A673 (cell line): ENCODE measurements at regions of chr2 and their contacts with region 1.

Region 1: GRCh38 chr2:101697124-101698013 is at the start of gene MAP4K4:
- DNase-seq: peak; percentile 93
- H3K4me3 ChIP-seq: peak within 1 kb of the TSS; percentile 68
- H3K27ac ChIP-seq: peak within 1 kb of the TSS; percentile 82
- H3K4me1 ChIP-seq: peaks cover 9% of the 10 kb centered on the region
- H3K27me3 ChIP-seq: no peaks in the 10 kb centered on the region
- CTCF ChIP-seq: peak; percentile 42
- total RNA-seq, gene MAP4K4: 154 and 157 TPM in 2 replicates

Region 2: GRCh38 chr2:101770726-101771125 is 73.4 kb after region 1 on chr2:
- CTCF ChIA-PET with region 1: no interaction called
- POLR2A ChIA-PET with region 1: interaction called, 4 read pairs
- intact Hi-C with region 1: loop called (anchors 5 kb)
- DNase-seq: peak; percentile 81
- H3K4me3 ChIP-seq: no peak overlapping the region
- H3K27ac ChIP-seq: no peak overlapping the region
- H3K4me1 ChIP-seq: peaks cover 59% of the 10 kb centered on the region
- H3K27me3 ChIP-seq: no peaks in the 10 kb centered on the region
- CTCF ChIP-seq: peak; percentile 70

Region 3: GRCh38 chr2:101818531-101819451 is 121.4 kb after region 1 on chr2:
- CTCF ChIA-PET with region 1: interaction called, 6 read pairs
- POLR2A ChIA-PET with region 1: no interaction called
- intact Hi-C with region 1: loop called (anchors 5 kb)
- DNase-seq: no peak
- H3K4me3 ChIP-seq: no peak overlapping the region
- H3K27ac ChIP-seq: no peak overlapping the region
- H3K4me1 ChIP-seq: peaks cover 42% of the 10 kb centered on the region
- H3K27me3 ChIP-seq: no peaks in the 10 kb centered on the region
- CTCF ChIP-seq: no peak